ENCODE measurements at regions of chr19 and their contacts with region 1.

Region 1: GRCh38 chr19:45779231-45780145 is 2.8 kb downstream of the DMPK start:
- DNase-seq: no peak
- H3K4me3 ChIP-seq: 0 out of 2 replicates have a peak overlapping the region, but pooled peaks have one; percentile 77
- H3K27me3 ChIP-seq: no peaks in the 10 kb centered on the region
- CTCF ChIP-seq: peak; percentile 32

Region 2: GRCh38 chr19:45363861-45364459 is 415.5 kb before region 1 on chr19:
- CTCF ChIA-PET with region 1: no interaction called
- POLR2A ChIA-PET with region 1: no interaction called
- DNase-seq: no peak
- H3K4me3 ChIP-seq: no peak overlapping the region
- H3K27me3 ChIP-seq: no peaks in the 10 kb centered on the region
- CTCF ChIP-seq: no peak

Region 3: GRCh38 chr19:45643024-45643926 is 136.2 kb before region 1 on chr19:
- CTCF ChIA-PET with region 1: no interaction called
- POLR2A ChIA-PET with region 1: no interaction called
- DNase-seq: no peak
- H3K4me3 ChIP-seq: no peak overlapping the region
- H3K27me3 ChIP-seq: no peaks in the 10 kb centered on the region
- CTCF ChIP-seq: peak; percentile 99

Region 4: DNA sequence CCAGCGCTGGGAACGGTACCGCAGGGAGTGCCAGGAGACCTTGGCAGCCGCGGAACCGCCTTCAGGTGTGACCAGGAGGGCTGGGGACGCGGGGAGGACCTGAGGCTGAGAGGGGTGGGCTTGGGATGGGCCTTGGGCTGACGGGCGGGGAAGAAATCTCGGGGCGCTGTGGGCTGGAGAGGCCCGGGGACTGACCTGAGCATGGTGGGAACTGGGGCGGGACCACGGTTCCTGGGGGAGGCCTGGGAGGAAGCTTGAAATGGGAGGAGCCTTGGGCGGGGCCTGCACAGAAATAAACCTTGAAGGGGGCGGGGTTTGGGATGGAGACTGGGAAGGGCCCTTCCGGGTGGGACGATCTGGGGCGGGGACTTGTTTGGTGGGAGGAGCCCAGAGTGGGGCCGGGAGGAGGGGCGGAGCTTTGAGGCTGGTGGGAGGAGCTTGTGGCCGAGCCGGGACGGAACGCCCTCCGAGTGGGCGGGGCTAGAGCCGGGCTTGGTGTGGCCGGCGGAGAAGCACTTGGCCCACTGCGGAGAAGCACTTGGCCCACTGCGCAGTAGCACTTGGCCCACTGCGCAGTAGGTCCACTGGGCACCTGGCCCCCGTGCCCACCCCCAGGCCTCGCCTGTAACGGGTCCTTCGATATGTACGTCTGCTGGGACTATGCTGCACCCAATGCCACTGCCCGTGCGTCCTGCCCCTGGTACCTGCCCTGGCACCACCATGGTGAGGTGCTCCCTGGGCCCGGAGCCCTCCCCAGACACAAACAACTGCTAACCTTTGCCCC is 108.6 kb before region 1 on chr19:
- CTCF ChIA-PET with region 1: no interaction called
- POLR2A ChIA-PET with region 1: interaction called, 14 read pairs
- DNase-seq: no peak
- H3K4me3 ChIP-seq: peak overlapping the region; percentile 29
- H3K27me3 ChIP-seq: peaks cover 1% of the 10 kb centered on the region; the same call in 1 of the 2 replicates
- CTCF ChIP-seq: no peak

Region 5: GRCh38 chr19:45764945-45765701 is 14.4 kb before region 1 on chr19:
- CTCF ChIA-PET with region 1: interaction called, 31 read pairs
- POLR2A ChIA-PET with region 1: interaction called, 24 read pairs
- DNase-seq: no peak
- H3K4me3 ChIP-seq: no peak overlapping the region
- H3K27me3 ChIP-seq: no peaks in the 10 kb centered on the region
- CTCF ChIP-seq: no peak

Region 6: DNA sequence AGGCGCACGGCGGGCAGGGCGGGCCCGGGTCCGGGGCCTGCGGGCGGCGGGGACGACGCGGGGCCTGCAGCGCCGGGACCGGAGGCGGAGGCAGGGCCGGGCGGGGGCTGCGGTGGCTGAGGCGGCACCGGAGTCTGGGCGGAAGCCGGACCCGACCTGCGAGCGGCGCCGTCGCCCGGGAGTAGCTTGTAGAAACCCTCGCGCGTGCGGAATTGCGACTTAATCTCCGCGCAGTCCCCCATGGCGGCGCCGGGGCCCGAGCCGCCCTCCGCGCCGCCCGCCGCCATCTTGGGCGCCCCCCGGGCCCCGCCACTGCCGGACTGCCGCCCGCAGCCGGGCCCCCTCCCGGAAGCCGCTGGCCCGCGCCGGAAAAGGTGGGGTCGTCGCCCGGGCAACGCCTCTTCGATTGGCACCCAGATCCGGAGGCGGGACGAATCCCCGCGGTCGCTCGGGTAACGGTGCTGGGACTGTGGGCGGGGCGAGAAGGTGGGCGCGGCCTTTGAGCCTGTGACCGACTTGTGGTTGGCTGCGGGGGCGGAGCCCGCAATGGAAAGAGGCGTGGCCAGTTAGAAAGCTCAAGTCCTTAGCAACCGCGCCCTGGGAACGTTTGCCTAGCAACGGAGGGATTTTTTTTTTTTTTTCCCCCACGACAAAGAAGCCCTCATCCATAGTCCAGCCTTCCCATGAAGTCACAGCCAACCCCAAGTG is 13.1 kb after region 1 on chr19 and contains the start of gene DMWD:
- CTCF ChIA-PET with region 1: interaction called, 31 read pairs
- POLR2A ChIA-PET with region 1: interaction called, 16 read pairs
- DNase-seq: peak; percentile 85
- H3K4me3 ChIP-seq: peak within 1 kb of the TSS; percentile 54
- H3K27me3 ChIP-seq: no peaks in the 10 kb centered on the region
- CTCF ChIP-seq: no peak
- polyA plus RNA-seq, gene DMWD: 20.3 and 28.6 TPM in 2 replicates

Region 7: GRCh38 chr19:45798995-45799517 is 19.6 kb after region 1 on chr19:
- CTCF ChIA-PET with region 1: interaction called, 31 read pairs
- POLR2A ChIA-PET with region 1: interaction called, 8 read pairs
- DNase-seq: no peak
- H3K4me3 ChIP-seq: no peak overlapping the region
- H3K27me3 ChIP-seq: no peaks in the 10 kb centered on the region
- CTCF ChIP-seq: peak; percentile 81

Region 8: DNA sequence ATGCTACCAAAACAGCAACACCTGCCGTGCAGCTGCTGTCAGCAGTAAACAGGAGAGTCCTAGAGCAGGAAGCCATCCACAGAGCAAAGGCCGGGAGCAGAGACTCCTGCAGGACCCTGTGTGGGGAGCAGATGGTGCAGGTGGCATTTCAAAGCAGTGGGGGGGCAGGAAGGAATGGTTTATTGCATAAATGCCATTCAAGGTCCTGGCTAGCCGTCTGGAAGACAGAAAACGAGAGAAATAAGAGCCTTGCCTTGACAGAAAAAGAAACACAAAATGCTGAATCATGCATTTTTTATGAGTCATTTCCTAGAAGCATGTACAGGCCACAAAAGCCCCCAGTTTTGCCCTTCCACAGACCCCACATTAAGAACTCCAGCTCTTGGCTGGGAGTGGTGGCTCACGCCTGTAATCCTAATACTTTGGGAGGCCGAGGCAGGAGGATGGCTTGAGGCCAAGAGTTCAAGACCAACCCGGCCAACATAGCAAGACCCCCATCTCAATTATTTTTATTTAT is 30.2 kb after region 1 on chr19:
- CTCF ChIA-PET with region 1: interaction called, 3 read pairs
- POLR2A ChIA-PET with region 1: interaction called, 10 read pairs
- DNase-seq: peak; percentile 23
- H3K4me3 ChIP-seq: no peak overlapping the region
- H3K27me3 ChIP-seq: no peaks in the 10 kb centered on the region
- CTCF ChIP-seq: no peak

Measured in BJ (cell line).